ENCODE measurements at regions of chr4 and their contacts with region 1.

Region 1: GRCh38 chr4:101050088-101050836 is 297.1 kb downstream of the PPP3CA start:
- DNase-seq: no peak
- H3K4me3 ChIP-seq: no peak overlapping the region
- H3K4me3 Mint-ChIP-seq: peak overlapping the region in 1 of 8 donors; percentile 47
- H3K27ac ChIP-seq: no peak overlapping the region
- H3K27ac Mint-ChIP-seq: no peak overlapping the region
- H3K4me1 ChIP-seq: no peaks in the 10 kb centered on the region
- H3K4me1 Mint-ChIP-seq: peaks cover 7 to 20% (median 11%) of the 10 kb centered on the region in 4 donors
- H3K27me3 ChIP-seq: no peaks in the 10 kb centered on the region
- H3K27me3 Mint-ChIP-seq: no peaks in the 10 kb centered on the region

Region 2: GRCh38 chr4:100848869-100849268 is 201.4 kb before region 1 on chr4:
- CTCF ChIA-PET with region 1: no interaction called
- POLR2A ChIA-PET with region 1: no interaction called
- intact Hi-C with region 1: loop called (anchors 1 kb)
- DNase-seq: peak in 4 of 5 donors; percentile 2 to 5 (median 4)
- H3K4me3 ChIP-seq: no peak overlapping the region
- H3K4me3 Mint-ChIP-seq: no peak overlapping the region
- H3K27ac ChIP-seq: no peak overlapping the region
- H3K27ac Mint-ChIP-seq: no peak overlapping the region
- H3K4me1 ChIP-seq: no peaks in the 10 kb centered on the region
- H3K4me1 Mint-ChIP-seq: peaks cover 0 to 2% (median 0%) of the 10 kb centered on the region in 4 donors
- H3K27me3 ChIP-seq: no peaks in the 10 kb centered on the region
- H3K27me3 Mint-ChIP-seq: no peaks in the 10 kb centered on the region

Region 3: DNA sequence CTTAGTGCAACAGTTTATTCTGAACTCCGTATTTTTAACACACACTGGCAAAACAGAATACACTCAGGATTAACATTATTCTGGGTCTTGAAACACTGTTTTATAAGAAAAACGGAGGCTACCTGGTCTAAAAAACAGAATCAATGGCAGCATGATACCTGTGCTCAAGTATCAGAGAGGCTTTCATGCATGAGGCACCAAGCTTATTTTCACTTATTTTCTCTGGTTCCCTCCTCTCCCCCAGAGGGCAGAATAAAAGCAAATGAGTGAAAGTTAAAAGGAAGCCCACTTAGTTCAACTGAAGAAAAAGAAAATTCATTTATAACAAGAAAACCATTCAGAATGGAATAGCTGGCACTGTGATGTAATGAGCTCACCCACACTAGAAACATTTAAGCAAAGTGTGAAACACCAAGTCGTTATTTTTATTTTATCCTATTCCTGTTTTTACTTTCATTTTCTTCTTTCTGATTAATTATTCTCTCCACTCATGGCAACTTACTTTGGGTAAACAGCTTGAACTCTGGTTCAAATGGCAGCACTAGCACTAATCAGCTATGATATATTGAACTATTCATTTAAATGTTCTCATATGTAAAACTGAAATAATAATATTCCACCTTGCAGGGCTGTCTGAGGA is 85.2 kb after region 1 on chr4:
- CTCF ChIA-PET with region 1: no interaction called
- POLR2A ChIA-PET with region 1: no interaction called
- intact Hi-C with region 1: no loop called
- DNase-seq: no peak
- H3K4me3 ChIP-seq: no peak overlapping the region
- H3K4me3 Mint-ChIP-seq: peak overlapping the region; percentile 5 to 86 (median 66)
- H3K27ac ChIP-seq: no peak overlapping the region
- H3K27ac Mint-ChIP-seq: peak overlapping the region in 4 of 7 donors; percentile 13 to 82 (median 24)
- H3K4me1 ChIP-seq: peaks cover 16% of the 10 kb centered on the region
- H3K4me1 Mint-ChIP-seq: peaks cover 37 to 62% (median 47%) of the 10 kb centered on the region in 4 donors
- H3K27me3 ChIP-seq: no peaks in the 10 kb centered on the region
- H3K27me3 Mint-ChIP-seq: no peaks in the 10 kb centered on the region

Region 4: GRCh38 chr4:101419324-101420135 is 369.3 kb after region 1 on chr4:
- CTCF ChIA-PET with region 1: no interaction called
- POLR2A ChIA-PET with region 1: no interaction called
- intact Hi-C with region 1: no loop called
- DNase-seq: no peak
- H3K4me3 ChIP-seq: no peak overlapping the region
- H3K4me3 Mint-ChIP-seq: peak overlapping the region in 2 of 8 donors; percentile 25 to 53
- H3K27ac ChIP-seq: no peak overlapping the region
- H3K27ac Mint-ChIP-seq: no peak overlapping the region
- H3K4me1 ChIP-seq: peaks cover 38% of the 10 kb centered on the region
- H3K4me1 Mint-ChIP-seq: peaks cover 29 to 42% (median 35%) of the 10 kb centered on the region in 4 donors
- H3K27me3 ChIP-seq: no peaks in the 10 kb centered on the region
- H3K27me3 Mint-ChIP-seq: peaks cover 14 to 21% of the 10 kb centered on the region in 2 donors

Measured in CD4-positive, alpha-beta memory T cell (primary cell).